ENCODE measurements at regions of chr12 and their contacts with region 1.

Region 1: GRCh38 chr12:65977384-65977783 is 153.1 kb downstream of the HMGA2 start:
- DNase-seq: no peak
- ATAC-seq: no peak
- H3K4me3 ChIP-seq: no peak overlapping the region
- H3K27ac ChIP-seq: no peak overlapping the region
- H3K4me1 ChIP-seq: no peaks in the 10 kb centered on the region
- H3K27me3 ChIP-seq: no peaks in the 10 kb centered on the region
- CTCF ChIP-seq: no peak

Region 2: DNA sequence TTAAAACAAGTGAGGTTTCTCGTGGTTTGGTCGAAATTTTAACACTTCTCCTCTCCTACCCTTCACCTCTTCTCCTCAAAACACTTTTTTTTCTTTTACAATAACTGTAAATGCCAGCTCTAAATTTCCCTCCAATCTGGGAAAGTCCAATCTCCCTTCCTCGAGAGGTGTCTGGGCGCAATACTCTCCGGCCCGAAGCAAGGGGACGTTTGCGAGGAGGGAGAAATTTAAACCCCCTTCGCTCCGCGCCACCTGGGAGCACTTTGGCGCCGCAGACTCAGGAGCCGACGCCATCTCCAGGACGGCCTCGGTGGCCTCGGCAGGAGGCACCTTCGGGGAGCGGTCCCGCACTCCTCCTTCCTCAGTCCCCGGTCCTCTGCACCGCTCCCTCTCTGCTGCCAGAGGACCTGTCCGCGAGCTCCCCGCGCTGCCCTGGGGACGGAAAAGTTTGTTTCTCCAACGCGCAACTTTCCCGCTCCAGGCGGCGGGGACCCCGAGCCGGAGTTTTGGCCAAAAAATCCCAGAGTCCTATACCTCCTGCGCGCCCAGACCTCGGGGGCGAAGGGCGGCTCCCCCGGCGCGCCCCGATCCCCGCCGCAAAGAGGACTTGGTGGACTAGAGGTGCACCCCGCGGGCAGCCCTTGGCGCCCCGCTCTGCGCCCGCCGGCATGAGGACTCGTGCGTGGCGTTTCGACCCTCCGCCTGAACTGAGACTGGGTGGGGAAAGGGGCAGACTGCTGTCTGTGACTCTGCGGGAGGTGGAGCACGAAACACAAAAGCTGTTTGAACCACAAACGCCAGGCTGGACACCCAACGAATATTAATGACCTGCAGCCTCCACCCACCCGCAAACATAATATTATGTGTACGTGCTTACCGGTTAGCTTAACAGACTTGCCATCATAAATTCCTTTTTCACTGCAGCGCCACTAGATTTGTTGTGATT is 248.3 kb before region 1 on chr12:
- intact Hi-C with region 1: loop called in 1 of 10 experiments (anchors 10 kb)
- DNase-seq: no peak
- ATAC-seq: peak in 1 of 8 donors; percentile 21
- H3K4me3 ChIP-seq: peak overlapping the region in 5 of 10 donors; percentile 5 to 33 (median 16)
- H3K27ac ChIP-seq: no peak overlapping the region
- H3K4me1 ChIP-seq: peaks cover 0 to 11% (median 7%) of the 10 kb centered on the region in 9 donors
- H3K27me3 ChIP-seq: peaks cover 23 to 91% (median 80%) of the 10 kb centered on the region in 7 donors
- CTCF ChIP-seq: no peak

Region 3: DNA sequence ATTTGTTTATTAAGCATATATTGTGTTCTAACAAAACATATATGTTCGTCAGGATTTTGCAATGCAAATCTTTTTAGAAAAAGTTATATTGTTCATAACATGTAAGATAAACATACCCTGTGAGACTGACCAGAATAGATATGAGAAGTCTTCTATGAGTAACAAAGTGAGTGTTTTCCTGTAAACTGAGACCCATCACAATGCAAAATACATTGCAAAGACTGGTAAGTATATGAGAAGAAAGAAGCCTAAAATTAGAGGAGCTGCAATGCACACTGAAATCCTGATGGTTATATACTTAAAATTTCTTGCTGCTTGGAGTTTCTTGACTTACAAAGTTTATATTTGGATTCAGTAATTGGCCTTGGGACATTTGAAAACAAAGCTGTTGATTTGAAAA is 147.1 kb before region 1 on chr12:
- intact Hi-C with region 1: loop called in 1 of 10 experiments (anchors 10 kb)
- DNase-seq: no peak
- ATAC-seq: no peak
- H3K4me3 ChIP-seq: no peak overlapping the region
- H3K27ac ChIP-seq: no peak overlapping the region
- H3K4me1 ChIP-seq: peaks cover 0 to 21% (median 10%) of the 10 kb centered on the region in 9 donors
- H3K27me3 ChIP-seq: peaks cover 7 to 85% (median 29%) of the 10 kb centered on the region in 7 donors
- CTCF ChIP-seq: no peak

Measured in heart right ventricle (tissue), 16 donors.